Sigmoid colon (tissue), 7 donors: ENCODE measurements at regions of chr10 and their contacts with region 1.

Region 1: DNA sequence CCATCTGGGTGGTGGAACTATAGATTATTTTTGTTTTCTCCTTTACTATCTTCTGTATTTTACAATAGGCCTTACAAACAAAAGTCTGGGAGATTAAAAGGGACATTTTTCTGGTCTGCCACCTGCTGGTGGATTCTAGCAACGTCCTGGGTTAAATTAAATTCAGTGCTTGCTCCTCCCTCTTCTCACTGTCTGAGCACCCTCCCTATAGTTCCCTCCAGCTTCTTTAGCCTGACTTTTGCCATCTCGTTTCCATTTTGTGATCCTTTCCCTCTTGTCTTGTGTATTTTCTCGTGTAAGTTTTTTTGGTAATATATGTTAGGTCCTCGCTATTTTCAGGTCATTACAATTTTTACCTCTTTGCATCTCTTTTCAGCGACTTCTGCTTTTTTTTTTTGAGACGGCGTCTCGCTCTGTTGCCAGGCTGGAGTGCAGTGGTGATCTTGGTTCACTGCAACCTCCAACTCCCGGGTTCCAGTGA is 16.1 kb downstream of the ANKRD16 start:
- DNase-seq: peak; percentile 72
- H3K4me3 ChIP-seq: no peak overlapping the region
- H3K27ac ChIP-seq: no peak overlapping the region
- H3K4me1 ChIP-seq: no peaks in the 10 kb centered on the region
- H3K27me3 ChIP-seq: no peaks in the 10 kb centered on the region
- CTCF ChIP-seq: peak; percentile 63 to 73 (median 69)
- EP300 ChIP-seq: no peak
- POLR2A ChIP-seq: no peak

Region 2: GRCh38 chr10:5446390-5446926 is 427.1 kb before region 1 on chr10:
- intact Hi-C with region 1: loop called (anchors 5 kb)
- DNase-seq: peak; percentile 97
- H3K4me3 ChIP-seq: peak overlapping the region; percentile 53 to 63 (median 60)
- H3K27ac ChIP-seq: peak overlapping the region; percentile 79 to 84 (median 82)
- H3K4me1 ChIP-seq: peaks cover 0 to 23% (median 18%) of the 10 kb centered on the region in 4 donors
- H3K27me3 ChIP-seq: no peaks in the 10 kb centered on the region
- CTCF ChIP-seq: no peak
- EP300 ChIP-seq: no peak
- POLR2A ChIP-seq: peak; percentile 89 to 94

Region 3: GRCh38 chr10:5692461-5693358 is 180.8 kb before region 1 on chr10:
- intact Hi-C with region 1: no loop called
- DNase-seq: peak; percentile 66
- H3K4me3 ChIP-seq: peak overlapping the region; percentile 25 to 55 (median 48)
- H3K27ac ChIP-seq: peak overlapping the region in 2 of 4 donors; percentile 42
- H3K4me1 ChIP-seq: peaks cover 0 to 26% (median 17%) of the 10 kb centered on the region in 4 donors
- H3K27me3 ChIP-seq: no peaks in the 10 kb centered on the region
- CTCF ChIP-seq: no peak
- EP300 ChIP-seq: no peak
- POLR2A ChIP-seq: no peak